A673 (cell line): ENCODE measurements at regions of chrX and their contacts with region 1.

Region 1: GRCh38 chrX:43557792-43558191 is 98.3 kb upstream of the MAOA start:
- DNase-seq: peak; percentile 77
- H3K4me3 ChIP-seq: no peak overlapping the region
- H3K27ac ChIP-seq: no peak overlapping the region
- H3K4me1 ChIP-seq: peaks cover 12% of the 10 kb centered on the region
- H3K27me3 ChIP-seq: no peaks in the 10 kb centered on the region
- CTCF ChIP-seq: peak; percentile 81

Region 2: DNA sequence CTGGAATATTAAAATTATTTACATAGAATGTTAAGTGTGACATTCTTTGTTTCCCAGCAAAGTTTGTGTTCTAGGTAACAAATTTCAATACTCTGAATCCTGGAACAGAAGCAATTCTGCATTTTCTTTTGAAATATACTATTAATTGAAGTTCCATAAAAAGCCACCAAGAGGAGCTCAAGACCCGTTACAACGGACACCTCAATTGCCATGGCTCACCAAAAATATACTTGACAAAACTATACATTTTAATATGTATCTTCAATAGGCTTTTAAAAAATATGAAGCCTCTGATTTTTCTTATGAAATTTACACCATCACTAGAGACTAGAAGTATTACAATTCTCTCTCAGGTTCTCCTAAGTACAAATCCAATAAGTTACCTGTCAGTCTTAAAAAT is 1999.3 kb before region 1 on chrX:
- CTCF ChIA-PET with region 1: no interaction called
- POLR2A ChIA-PET with region 1: no interaction called
- intact Hi-C with region 1: loop called (anchors 10 kb)
- DNase-seq: peak; percentile 44
- H3K4me3 ChIP-seq: no peak overlapping the region
- H3K27ac ChIP-seq: no peak overlapping the region
- H3K4me1 ChIP-seq: peaks cover 12% of the 10 kb centered on the region
- H3K27me3 ChIP-seq: no peaks in the 10 kb centered on the region
- CTCF ChIP-seq: peak; percentile 56

Region 3: GRCh38 chrX:41796577-41796976 is 1761.2 kb before region 1 on chrX:
- CTCF ChIA-PET with region 1: no interaction called
- POLR2A ChIA-PET with region 1: no interaction called
- intact Hi-C with region 1: loop called (anchors 2 kb)
- DNase-seq: no peak
- H3K4me3 ChIP-seq: no peak overlapping the region
- H3K27ac ChIP-seq: no peak overlapping the region
- H3K4me1 ChIP-seq: no peaks in the 10 kb centered on the region
- H3K27me3 ChIP-seq: no peaks in the 10 kb centered on the region
- CTCF ChIP-seq: no peak

Region 4: DNA sequence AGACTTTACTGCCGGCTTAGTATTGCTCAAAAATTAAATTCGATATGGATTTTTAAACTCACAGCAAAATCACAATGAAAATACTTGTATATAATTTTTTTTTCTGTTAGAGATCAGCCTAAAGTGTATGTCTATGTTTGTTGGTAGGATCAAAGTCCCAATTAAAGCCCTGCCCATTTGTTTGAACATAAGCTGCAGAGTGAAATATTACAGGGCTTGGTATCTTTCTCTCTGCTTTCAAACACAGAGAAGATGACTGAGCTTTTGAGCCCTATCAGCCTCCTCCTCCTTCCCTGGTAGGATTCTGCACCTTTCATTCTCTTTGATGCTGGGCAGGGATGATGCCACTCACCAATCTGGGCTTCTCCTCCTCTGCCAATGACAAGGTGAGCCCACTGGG is 1125.2 kb before region 1 on chrX:
- CTCF ChIA-PET with region 1: no interaction called
- POLR2A ChIA-PET with region 1: no interaction called
- intact Hi-C with region 1: no loop called
- DNase-seq: no peak
- H3K4me3 ChIP-seq: no peak overlapping the region
- H3K27ac ChIP-seq: no peak overlapping the region
- H3K4me1 ChIP-seq: no peaks in the 10 kb centered on the region
- H3K27me3 ChIP-seq: no peaks in the 10 kb centered on the region
- CTCF ChIP-seq: no peak

Region 5: DNA sequence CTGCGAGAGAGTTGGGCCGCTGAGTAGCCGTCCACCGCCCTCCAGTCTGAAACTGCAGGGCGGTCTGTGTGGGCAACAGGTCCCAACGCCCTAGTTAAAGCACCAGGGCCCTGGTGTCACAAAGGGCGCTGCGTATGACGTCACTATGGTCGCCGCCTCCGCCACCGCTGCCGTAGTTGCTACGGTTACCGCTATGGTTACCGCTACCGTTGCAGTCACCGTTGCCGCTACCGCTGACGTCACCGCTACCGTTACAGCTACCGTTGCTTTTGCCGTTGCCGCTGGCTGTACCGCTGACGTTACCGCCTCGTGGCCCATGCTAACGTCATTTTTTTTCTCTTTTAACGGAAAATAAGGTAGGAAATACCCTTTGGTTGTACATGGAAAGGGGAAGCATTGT is 779.7 kb before region 1 on chrX and contains the start of gene PPP1R2C:
- CTCF ChIA-PET with region 1: no interaction called
- POLR2A ChIA-PET with region 1: no interaction called
- intact Hi-C with region 1: no loop called
- DNase-seq: no peak
- H3K4me3 ChIP-seq: no peak within 1 kb of the TSS
- H3K27ac ChIP-seq: no peak within 1 kb of the TSS
- H3K4me1 ChIP-seq: no peaks in the 10 kb centered on the region
- H3K27me3 ChIP-seq: no peaks in the 10 kb centered on the region
- CTCF ChIP-seq: no peak
- total RNA-seq, gene PPP1R2C: not detected in 2 replicates

Region 6: GRCh38 chrX:43148305-43148704 is 409.5 kb before region 1 on chrX:
- CTCF ChIA-PET with region 1: no interaction called
- POLR2A ChIA-PET with region 1: no interaction called
- intact Hi-C with region 1: loop called (anchors 10 kb)
- DNase-seq: no peak
- H3K4me3 ChIP-seq: no peak overlapping the region
- H3K27ac ChIP-seq: no peak overlapping the region
- H3K4me1 ChIP-seq: peaks cover 13% of the 10 kb centered on the region
- H3K27me3 ChIP-seq: no peaks in the 10 kb centered on the region
- CTCF ChIP-seq: no peak

Region 7: DNA sequence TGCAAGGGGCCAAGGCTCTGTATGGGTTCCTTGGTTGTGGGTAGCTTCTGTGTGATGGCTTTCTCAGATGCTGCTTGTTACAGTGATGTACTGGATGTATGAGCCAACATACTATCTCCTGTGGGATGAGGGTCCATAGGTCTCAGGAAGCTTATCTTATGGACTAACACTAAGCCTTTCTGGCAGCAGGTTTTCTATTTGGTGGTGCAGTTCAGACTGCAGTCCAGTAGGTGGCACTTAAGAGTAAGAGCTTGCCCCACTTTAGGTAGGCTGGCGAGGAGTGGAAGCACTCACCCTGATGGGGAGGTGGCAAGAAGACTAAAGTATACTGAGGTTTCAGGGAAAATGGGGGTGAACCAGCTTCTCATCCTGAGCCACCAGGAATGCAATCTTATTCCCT is 208.4 kb before region 1 on chrX:
- CTCF ChIA-PET with region 1: interaction called, 19 read pairs
- POLR2A ChIA-PET with region 1: no interaction called
- intact Hi-C with region 1: loop called (anchors 1 kb)
- DNase-seq: peak; percentile 71
- H3K4me3 ChIP-seq: no peak overlapping the region
- H3K27ac ChIP-seq: no peak overlapping the region
- H3K4me1 ChIP-seq: no peaks in the 10 kb centered on the region
- H3K27me3 ChIP-seq: no peaks in the 10 kb centered on the region
- CTCF ChIP-seq: peak; percentile 82

Region 8: DNA sequence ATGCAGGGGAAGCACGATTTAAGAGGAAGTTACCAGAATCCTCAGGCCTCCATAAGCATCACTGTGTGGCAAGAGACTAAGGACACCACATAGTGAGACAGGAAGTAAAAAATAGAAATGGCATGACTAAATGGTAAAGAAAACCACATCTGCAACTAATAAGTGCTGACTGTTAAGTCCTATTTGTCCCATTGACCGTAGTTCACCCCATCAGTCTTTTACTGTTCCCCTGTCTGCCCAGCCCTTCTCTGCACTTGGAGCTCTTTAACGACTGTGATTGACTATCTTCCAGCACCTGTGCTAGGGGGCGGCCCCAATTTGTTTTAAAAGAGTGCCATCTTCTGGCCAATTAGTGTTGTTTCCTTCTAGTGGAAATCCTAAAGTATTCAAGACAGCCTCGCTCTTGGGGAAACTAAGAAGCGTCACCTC is 192.5 kb after region 1 on chrX:
- CTCF ChIA-PET with region 1: interaction called, 9 read pairs
- POLR2A ChIA-PET with region 1: no interaction called
- intact Hi-C with region 1: loop called (anchors 1 kb)
- DNase-seq: peak; percentile 82
- H3K4me3 ChIP-seq: no peak overlapping the region
- H3K27ac ChIP-seq: no peak overlapping the region
- H3K4me1 ChIP-seq: no peaks in the 10 kb centered on the region
- H3K27me3 ChIP-seq: no peaks in the 10 kb centered on the region
- CTCF ChIP-seq: peak; percentile 69

Region 9: GRCh38 chrX:43949669-43950068 is 391.9 kb after region 1 on chrX:
- CTCF ChIA-PET with region 1: no interaction called
- POLR2A ChIA-PET with region 1: no interaction called
- intact Hi-C with region 1: loop called (anchors 10 kb)
- DNase-seq: peak; percentile 75
- H3K4me3 ChIP-seq: no peak overlapping the region
- H3K27ac ChIP-seq: no peak overlapping the region
- H3K4me1 ChIP-seq: peaks cover 19% of the 10 kb centered on the region
- H3K27me3 ChIP-seq: no peaks in the 10 kb centered on the region
- CTCF ChIP-seq: peak; percentile 76